CD8-positive, alpha-beta memory T cell (primary cell): ENCODE measurements at regions of chr5 and their contacts with region 1.

Region 1: GRCh38 chr5:34898258-34898895 is 16.9 kb downstream of the RAD1 start:
- DNase-seq: peak; percentile 30 to 67 (median 31)
- H3K4me3 ChIP-seq: no peak overlapping the region
- H3K4me3 Mint-ChIP-seq: no peak overlapping the region
- H3K27ac ChIP-seq: no peak overlapping the region
- H3K27ac Mint-ChIP-seq: no peak overlapping the region
- H3K4me1 ChIP-seq: no peaks in the 10 kb centered on the region
- H3K4me1 Mint-ChIP-seq: no peaks in the 10 kb centered on the region
- H3K27me3 ChIP-seq: no peaks in the 10 kb centered on the region
- H3K27me3 Mint-ChIP-seq: no peaks in the 10 kb centered on the region

Region 2: GRCh38 chr5:34522599-34523386 is 375.6 kb before region 1 on chr5:
- CTCF ChIA-PET with region 1: interaction called, 37 read pairs
- POLR2A ChIA-PET with region 1: no interaction called
- DNase-seq: peak; percentile 9 to 63 (median 23)
- H3K4me3 ChIP-seq: no peak overlapping the region
- H3K4me3 Mint-ChIP-seq: no peak overlapping the region
- H3K27ac ChIP-seq: no peak overlapping the region
- H3K27ac Mint-ChIP-seq: no peak overlapping the region
- H3K4me1 ChIP-seq: no peaks in the 10 kb centered on the region
- H3K4me1 Mint-ChIP-seq: no peaks in the 10 kb centered on the region
- H3K27me3 ChIP-seq: no peaks in the 10 kb centered on the region
- H3K27me3 Mint-ChIP-seq: peaks cover 2 to 14% of the 10 kb centered on the region in 2 donors

Region 3: DNA sequence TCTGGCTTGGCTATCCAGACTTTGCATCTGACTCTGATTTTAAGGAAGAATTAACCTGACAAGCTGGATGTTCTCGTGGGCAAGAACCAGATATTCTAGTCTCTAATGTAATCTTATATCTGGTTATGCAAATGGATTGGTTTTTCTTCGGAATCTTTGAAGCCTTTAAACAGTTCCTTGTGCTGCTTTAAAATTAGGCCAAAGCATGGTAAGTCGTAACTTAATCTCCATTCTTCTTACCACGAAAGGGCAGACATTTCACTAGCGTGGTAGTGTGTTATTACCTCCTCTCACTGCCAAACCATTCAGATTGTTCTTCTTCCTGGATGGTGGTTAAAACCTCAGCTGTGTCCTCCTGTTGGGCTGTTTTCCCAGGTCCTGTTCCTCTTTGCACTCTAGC is 93.5 kb before region 1 on chr5:
- CTCF ChIA-PET with region 1: no interaction called
- POLR2A ChIA-PET with region 1: no interaction called
- DNase-seq: no peak
- H3K4me3 ChIP-seq: no peak overlapping the region
- H3K4me3 Mint-ChIP-seq: no peak overlapping the region
- H3K27ac ChIP-seq: no peak overlapping the region
- H3K27ac Mint-ChIP-seq: no peak overlapping the region
- H3K4me1 ChIP-seq: no peaks in the 10 kb centered on the region
- H3K4me1 Mint-ChIP-seq: no peaks in the 10 kb centered on the region
- H3K27me3 ChIP-seq: no peaks in the 10 kb centered on the region
- H3K27me3 Mint-ChIP-seq: peaks cover 3 to 14% of the 10 kb centered on the region in 2 donors